PC-3 (cell line): ENCODE measurements at regions of chr16 and their contacts with region 1.

Region 1: GRCh38 chr16:68328151-68328859 is 17.5 kb downstream of the PRMT7 start:
- DNase-seq: peak; percentile 83
- ATAC-seq: peak; percentile 95
- H3K4me3 ChIP-seq: no peak overlapping the region
- H3K27ac ChIP-seq: no peak overlapping the region
- H3K4me1 ChIP-seq: no peaks in the 10 kb centered on the region
- H3K27me3 ChIP-seq: no peaks in the 10 kb centered on the region
- CTCF ChIP-seq: peak; percentile 80

Region 2: DNA sequence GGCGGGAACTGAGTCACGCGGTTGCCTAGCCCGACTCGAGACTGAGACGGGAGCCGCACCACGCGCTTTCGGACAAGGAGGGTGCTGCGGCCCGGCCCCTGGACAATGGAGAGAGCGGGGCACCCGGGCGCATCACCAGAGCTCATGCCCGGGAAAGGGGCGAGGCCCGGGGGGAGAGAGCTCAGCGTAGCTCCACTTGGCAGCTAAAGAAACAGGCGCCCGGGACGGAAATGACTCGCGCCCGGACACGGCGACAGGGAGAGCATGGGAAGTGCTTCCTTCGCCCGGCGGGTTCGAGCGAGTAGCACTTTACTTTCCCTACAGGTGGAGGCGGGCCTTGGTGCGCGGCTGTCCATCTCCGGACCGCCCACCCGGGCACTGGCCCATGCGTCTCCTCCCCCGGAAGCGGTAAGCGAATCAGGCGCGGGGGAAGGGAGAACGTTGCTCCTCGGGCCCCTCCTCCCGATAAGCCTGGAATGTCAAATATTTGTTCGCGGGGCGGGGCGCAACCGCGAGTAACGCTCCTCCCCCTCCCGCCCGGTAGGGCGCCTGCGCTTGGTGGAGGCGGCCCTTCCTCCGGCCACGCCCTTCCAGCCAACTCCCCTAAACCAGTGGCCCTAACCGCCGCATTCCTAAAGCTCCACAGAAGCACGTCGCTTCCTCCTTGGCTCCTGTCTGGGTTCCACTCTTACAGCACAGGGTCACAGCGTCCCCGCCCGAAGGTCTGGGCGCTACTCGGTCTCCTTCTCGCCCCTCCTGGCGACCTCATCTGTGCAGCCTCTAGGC is 90.9 kb before region 1 on chr16:
- CTCF ChIA-PET with region 1: no interaction called
- POLR2A ChIA-PET with region 1: no interaction called
- intact Hi-C with region 1: loop called (anchors 1 kb)
- DNase-seq: peak; percentile 96
- ATAC-seq: peak; percentile 63
- H3K4me3 ChIP-seq: peak overlapping the region; percentile 85
- H3K27ac ChIP-seq: peak overlapping the region; percentile 93
- H3K4me1 ChIP-seq: peaks cover 28% of the 10 kb centered on the region
- H3K27me3 ChIP-seq: no peaks in the 10 kb centered on the region
- CTCF ChIP-seq: no peak

Region 3: DNA sequence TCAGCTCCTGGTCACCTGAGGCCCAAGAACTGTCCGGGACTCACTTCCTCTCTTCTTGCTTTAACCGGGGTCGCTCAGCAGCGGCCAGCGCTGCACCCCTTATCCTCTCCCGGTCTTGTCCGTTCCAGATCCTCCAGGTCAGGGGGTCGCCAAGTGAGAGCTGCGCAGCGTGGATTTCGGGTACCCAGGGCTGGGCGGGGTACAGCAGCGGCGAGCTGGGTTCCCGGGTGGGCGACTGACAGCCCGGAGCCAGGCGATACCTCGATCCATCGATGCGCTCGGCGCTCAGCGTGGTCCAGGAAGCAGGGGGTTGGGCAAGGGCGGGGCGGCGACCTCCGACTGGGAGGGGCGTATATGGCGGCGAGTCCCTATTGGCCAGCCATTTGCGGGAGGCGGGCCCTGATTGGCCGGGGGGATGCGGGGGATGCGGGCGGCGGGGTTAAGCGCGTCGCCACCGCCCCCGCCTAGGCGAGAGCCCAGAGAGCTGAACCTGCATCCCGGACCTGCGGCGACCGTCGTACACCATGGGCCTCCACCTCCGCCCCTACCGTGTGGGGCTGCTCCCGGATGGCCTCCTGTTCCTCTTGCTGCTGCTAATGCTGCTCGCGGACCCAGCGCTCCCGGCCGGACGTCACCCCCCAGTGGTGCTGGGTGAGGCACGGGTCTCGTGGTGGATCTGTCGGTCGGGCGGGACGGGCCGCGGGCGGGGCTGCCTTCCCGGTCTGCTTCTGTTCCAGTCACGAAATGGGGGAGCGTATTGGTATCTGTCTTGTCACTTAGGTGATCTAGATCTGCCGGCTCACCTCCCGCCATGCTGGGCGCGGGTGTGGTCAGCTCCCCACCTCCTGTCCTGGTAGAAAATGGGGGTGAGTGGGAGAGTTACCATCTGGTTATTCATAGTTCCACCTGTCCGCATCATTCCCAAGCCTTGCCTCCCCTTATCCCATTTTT is 83.1 kb before region 1 on chr16 and contains the start of gene PLA2G15:
- CTCF ChIA-PET with region 1: no interaction called
- POLR2A ChIA-PET with region 1: no interaction called
- intact Hi-C with region 1: loop called (anchors 1 kb)
- DNase-seq: peak; percentile 82
- ATAC-seq: peak; percentile 94
- H3K4me3 ChIP-seq: peak within 1 kb of the TSS; percentile 91
- H3K27ac ChIP-seq: no peak within 1 kb of the TSS
- H3K4me1 ChIP-seq: peaks cover 15% of the 10 kb centered on the region; the same call in 1 of the 2 replicates
- H3K27me3 ChIP-seq: no peaks in the 10 kb centered on the region
- CTCF ChIP-seq: no peak
- total RNA-seq, gene PLA2G15: 16.4 and 16.8 TPM in 2 replicates

Region 4: DNA sequence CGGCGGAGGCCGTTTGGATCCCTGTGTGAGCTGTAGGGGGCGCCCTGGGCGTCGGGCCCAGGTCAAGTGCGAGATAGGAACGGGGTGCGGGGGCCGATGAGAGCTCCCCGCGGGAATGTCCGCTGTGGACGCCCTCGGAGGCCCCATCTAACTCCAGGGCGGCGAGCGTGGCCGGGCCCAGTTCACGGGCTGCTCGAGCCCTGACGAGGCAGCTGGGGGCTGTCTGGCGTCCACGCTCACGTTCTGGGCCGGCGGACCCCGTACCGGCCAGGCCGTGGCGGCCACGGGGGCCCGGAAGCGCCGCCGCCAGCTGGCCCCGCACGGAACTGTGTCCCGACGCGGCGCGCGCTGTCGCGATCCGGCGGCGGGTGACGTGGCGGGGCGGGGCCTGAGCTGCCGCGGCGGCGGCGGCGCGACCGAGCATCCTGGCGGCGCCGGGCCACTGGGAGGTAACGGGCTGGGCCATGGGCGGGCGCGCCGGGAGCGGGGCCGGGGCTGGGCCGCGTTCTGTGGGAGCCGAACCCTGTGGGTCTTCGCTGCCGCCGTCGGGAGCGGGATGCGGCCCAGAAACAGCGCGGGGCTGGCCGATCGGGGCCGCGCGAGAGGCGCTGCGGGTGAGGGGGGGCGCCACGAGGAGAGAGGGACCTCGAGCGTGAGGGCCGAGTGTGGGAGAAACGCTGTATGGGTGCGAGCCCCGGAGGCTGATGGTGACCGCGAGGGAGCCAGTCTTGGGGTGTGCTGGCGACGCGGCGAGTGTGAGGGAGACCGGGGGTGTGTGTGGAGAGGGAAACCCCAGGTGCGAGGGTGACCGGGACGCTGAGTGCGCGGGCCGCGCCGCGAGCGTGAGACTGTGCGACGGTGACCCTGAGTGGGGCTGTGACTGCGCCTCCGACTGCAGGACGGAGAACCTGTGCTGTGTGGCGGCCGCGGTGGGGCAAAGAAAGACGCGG is 63.9 kb before region 1 on chr16 and contains the start of gene SLC7A6:
- CTCF ChIA-PET with region 1: interaction called, 6 read pairs
- POLR2A ChIA-PET with region 1: no interaction called
- intact Hi-C with region 1: loop called (anchors 1 kb)
- DNase-seq: peak; percentile 74
- ATAC-seq: peak; percentile 70
- H3K4me3 ChIP-seq: peak within 1 kb of the TSS; percentile 92
- H3K27ac ChIP-seq: peak within 1 kb of the TSS; percentile 63
- H3K4me1 ChIP-seq: peaks cover 14% of the 10 kb centered on the region; the same call in 1 of the 2 replicates
- H3K27me3 ChIP-seq: no peaks in the 10 kb centered on the region
- CTCF ChIP-seq: peak; percentile 57
- total RNA-seq, gene SLC7A6: 22.2 and 24.7 TPM in 2 replicates

Region 5: DNA sequence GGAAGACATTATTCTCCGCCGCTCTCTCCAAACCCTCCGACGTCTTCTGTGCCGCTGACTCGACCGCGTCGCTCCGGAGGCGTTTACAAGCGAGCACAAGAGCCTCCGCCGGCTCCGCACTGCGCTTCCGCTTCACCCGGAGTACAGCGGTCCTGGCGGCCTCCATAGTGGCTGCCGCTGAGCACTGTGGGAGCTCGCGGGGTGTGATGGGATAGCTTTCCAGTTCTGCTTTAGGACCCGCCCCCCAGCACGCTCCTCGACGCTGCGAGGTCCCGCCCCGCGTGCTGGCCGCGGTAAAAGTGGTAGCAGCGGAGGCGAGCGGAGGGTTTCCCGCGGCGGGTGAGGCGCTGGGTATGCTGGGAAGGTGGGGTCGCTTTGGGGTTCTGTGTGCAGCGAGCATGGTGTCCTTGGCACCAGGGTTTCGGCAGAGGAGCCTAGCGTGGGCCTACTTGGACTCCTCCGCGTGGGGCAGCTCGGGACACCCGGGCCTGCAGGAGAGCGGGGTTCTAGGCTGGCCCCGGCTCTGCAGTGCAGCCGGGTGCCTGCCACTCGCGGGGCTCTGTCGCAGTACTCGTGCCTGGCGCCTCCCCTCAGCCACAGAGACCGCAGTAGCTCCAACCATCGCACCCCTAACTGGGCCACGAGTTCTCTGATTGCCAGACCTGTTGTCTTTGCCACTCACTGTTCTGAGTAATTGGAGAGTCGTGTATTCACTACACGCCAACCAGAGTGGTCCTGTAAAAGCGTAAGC is 17.4 kb before region 1 on chr16 and contains the starts of genes PRMT7 and SLC7A6OS:
- CTCF ChIA-PET with region 1: interaction called, 11 read pairs
- POLR2A ChIA-PET with region 1: no interaction called
- intact Hi-C with region 1: no loop called
- DNase-seq: peak; percentile 81
- ATAC-seq: peak; percentile 99
- H3K4me3 ChIP-seq: peak within 1 kb of the TSS; percentile 98
- H3K27ac ChIP-seq: peak within 1 kb of the TSS; percentile 48
- H3K4me1 ChIP-seq: peaks cover 6% of the 10 kb centered on the region; the same call in 1 of the 2 replicates
- H3K27me3 ChIP-seq: no peaks in the 10 kb centered on the region
- CTCF ChIP-seq: no peak
- total RNA-seq, gene PRMT7: 46.4 and 48.1 TPM in 2 replicates
- total RNA-seq, gene SLC7A6OS: 12.6 TPM in 2 replicates